ENCODE measurements at regions of chr3 and their contacts with region 1.

Region 1: DNA sequence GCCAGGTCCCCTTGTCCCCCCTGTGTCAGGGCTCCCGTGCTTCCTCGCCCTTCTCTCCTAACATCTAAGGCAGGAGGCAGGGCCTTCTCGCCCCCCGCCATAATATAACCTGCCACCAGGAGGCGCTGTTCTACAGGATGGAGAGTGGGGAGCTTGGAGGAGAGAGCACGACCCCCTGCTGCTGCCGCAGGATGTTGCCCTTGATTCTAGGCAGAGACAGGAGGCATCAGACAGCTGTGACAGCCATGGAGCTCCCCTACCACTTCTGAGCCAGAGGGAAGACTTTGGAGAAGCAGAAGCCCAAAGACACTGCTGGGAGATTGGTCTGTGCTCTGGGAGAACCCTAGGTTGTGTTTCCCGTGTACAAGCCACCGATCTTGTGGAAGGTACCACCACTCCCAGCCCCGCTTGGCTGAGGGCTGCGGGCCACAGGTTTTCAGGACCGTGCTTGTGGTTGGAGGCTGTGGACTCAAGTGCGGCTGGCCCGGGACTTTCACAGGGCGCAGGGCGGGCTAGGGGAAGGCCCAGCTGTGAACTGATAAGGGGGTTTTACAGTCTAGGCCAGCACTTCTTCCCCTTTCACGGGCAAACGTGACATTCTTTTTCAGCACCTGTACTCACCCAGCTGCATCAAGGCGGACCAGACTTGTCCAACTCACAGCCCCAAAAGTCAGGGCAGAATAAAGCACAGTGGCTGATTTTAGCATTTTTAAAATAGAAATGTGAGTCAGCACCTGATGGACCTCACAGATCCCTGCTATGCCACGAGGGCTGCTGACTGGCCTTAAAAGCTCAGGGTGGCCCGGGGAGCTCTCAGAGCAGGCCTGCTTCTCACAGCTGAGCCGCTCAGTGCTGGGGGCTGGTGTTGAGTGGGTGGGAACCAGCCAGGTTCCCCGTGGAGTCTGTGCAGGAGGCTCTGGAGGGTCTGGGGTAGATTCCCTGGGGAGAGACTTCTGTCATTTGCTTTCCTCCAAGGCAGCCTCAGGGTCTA is 2.6 kb upstream of the TIGIT start:
- DNase-seq: peak; percentile 85
- CTCF ChIP-seq: peak; percentile 90

Region 2: GRCh38 chr3:114260152-114260551 is 31.1 kb before region 1 on chr3:
- CTCF ChIA-PET with region 1: interaction called, 10 read pairs
- POLR2A ChIA-PET with region 1: no interaction called
- DNase-seq: no peak
- CTCF ChIP-seq: no peak

Region 3: DNA sequence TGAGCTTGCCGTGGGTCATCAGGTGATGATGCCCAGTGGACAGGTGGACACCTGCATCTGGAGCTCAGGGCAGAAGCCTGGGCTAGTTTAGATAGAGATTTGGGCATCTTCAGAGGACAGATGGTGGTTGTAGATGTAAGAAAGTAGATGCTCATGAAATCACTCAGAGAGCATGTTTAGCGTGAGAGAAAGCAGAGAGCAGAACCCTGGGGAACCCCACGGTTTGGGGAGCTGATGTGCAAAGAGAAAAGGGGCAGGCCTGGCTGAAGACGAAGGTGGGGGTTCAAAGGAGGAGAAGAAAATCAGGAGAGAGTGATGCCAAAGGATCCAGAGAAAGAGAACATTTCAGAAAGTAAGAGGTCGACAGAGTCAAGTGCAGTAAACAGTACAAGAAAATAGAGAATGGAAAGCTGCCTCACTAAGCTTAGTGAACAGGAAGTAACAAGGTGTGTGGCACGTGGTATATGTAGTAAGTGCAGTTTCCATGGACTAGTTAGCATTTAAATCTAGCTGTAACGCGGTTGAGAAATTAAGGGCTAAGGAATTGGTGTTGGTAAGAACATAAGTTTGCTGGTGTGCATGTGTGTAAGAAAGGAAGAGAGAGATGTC is 16.1 kb after region 1 on chr3:
- CTCF ChIA-PET with region 1: interaction called, 76 read pairs
- POLR2A ChIA-PET with region 1: no interaction called
- DNase-seq: no peak
- CTCF ChIP-seq: no peak

Region 4: DNA sequence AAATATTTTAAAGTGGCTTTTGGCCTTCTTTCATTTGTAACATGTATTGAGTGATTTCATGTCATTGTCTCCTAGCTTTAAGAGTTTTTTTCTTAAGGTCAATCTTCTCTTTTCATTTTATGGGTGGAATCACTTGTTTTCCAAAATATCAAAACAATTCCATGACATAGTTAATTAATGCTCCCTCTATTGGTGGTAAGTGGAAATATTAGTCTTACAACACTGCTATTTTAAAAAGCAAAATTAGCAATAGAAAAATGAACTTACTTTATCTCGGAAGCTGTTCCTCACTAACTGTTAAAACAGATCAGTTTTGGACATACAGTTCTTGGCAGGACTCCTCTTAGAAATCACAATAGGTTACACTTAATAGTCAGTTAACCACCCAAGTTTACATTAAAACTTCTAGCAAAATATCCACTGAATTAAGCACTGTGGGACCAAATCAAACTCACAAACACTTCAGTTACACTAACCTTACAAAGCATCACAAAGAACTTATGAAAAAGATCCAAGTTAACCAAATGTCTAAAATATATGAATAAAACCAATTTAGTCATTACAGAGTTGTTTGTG is 45.0 kb after region 1 on chr3:
- CTCF ChIA-PET with region 1: interaction called, 11 read pairs
- POLR2A ChIA-PET with region 1: no interaction called
- DNase-seq: no peak
- CTCF ChIP-seq: peak; percentile 42

Region 5: GRCh38 chr3:114383875-114384557 is 92.8 kb after region 1 on chr3:
- CTCF ChIA-PET with region 1: interaction called, 14 read pairs
- POLR2A ChIA-PET with region 1: no interaction called
- DNase-seq: peak; percentile 66
- CTCF ChIP-seq: peak; percentile 90

Region 6: GRCh38 chr3:114994554-114995341 is 703.5 kb after region 1 on chr3:
- CTCF ChIA-PET with region 1: no interaction called
- POLR2A ChIA-PET with region 1: no interaction called
- DNase-seq: no peak
- CTCF ChIP-seq: no peak

Region 7: DNA sequence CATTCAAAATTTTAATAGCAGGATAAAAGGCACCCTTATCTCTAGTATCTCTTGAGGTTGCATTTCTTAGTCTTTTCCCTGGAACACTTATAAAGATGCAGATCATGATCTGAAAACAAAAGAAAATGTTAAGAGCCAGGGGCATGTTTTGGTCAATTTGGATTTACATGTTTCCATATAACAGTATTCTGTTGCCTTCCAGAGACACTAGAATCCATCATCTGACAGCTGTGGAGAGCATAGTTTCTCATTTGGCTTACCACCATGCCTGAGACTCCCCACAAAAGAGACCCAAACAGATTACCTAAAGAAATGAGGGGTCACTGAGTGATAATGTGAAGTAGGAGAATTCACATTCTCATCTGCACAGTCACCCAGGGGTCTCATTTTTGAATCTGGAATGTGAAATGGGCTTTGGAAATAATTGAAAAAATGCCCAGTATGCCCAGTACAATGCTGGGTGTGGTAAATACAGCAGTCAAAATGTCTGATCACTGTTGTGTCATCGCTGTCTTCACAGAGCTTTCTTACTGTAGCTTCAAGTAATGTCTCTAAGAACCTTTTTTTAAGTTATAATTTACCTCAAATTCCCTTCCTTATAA is 935.7 kb after region 1 on chr3:
- CTCF ChIA-PET with region 1: no interaction called
- POLR2A ChIA-PET with region 1: no interaction called
- DNase-seq: no peak
- CTCF ChIP-seq: no peak